HAP-1 (cell line): ENCODE measurements at regions of chr12 and their contacts with region 1.

Region 1: DNA sequence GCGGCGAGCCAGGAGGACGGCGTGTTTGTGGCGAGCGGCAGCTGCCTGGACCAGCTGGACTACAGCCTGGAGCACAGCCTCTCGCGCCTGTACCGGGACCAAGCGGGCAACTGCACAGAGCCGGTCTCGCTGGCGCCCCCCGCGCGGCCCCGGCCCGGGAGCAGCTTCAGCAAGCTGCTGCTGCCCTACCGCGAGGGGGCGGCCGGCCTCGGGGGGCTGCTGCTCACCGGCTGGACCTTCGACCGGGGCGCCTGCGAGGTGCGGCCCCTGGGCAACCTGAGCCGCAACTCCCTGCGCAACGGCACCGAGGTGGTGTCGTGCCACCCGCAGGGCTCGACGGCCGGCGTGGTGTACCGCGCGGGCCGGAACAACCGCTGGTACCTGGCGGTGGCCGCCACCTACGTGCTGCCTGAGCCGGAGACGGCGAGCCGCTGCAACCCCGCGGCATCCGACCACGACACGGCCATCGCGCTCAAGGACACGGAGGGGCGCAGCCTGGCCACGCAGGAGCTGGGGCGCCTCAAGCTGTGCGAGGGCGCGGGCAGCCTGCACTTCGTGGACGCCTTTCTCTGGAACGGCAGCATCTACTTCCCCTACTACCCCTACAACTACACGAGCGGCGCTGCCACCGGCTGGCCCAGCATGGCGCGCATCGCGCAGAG is 873 bp downstream of the PLXNC1 start:
- DNase-seq: peak; percentile 38 to 73
- H3K4me3 ChIP-seq: peak overlapping the region; percentile 60
- H3K4me1 ChIP-seq: peaks cover 29% of the 10 kb centered on the region
- H3K27me3 ChIP-seq: no peaks in the 10 kb centered on the region

Region 2: DNA sequence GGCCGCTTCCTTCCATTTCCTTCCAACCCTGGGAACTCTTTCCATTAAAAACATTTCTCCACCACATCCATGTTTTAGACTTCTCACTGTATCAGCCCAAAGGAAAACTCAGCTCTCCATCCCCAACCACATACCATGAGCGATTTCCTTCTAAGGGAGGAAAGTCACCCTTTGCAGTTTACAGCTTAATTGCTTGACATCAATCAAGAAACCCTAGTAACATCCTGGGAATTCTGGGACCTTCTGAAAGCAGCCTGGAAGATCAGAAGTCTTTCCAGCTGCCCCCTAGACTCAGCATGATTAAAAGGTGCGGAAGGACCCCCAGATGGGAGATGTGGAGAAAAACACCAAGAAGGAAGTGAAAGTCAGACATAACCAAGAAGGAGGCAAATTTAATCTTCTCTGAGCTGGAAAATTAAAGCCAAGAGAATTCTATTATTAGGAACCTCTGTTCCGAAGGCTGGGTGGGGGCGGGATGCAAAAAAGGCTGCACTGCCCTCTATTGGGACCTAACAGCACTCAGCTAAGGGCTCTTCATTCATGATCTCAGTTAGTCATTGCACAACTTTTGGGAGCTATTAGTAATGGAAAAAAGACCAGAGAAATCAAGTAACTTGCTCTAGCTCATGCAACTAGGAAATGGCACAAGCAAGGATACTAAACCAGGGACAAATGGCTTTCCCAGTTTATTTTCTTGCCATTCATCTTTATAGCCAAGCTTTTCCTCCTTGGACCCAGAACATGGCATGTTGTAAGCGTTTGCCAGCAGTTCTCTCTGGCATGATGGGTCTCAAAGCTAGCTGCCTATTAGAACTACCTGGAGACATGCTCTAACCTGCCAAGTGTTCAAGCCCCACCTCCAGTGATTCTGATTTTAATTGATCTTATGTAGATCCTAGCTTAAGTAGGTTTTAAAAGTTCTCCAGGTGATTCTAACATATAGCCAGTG is 74.0 kb before region 1 on chr12:
- in situ Hi-C with region 1: no loop called
- DNase-seq: peak; percentile 50 to 65
- H3K4me3 ChIP-seq: no peak overlapping the region
- H3K4me1 ChIP-seq: peaks cover 14% of the 10 kb centered on the region
- H3K27me3 ChIP-seq: no peaks in the 10 kb centered on the region

Region 3: DNA sequence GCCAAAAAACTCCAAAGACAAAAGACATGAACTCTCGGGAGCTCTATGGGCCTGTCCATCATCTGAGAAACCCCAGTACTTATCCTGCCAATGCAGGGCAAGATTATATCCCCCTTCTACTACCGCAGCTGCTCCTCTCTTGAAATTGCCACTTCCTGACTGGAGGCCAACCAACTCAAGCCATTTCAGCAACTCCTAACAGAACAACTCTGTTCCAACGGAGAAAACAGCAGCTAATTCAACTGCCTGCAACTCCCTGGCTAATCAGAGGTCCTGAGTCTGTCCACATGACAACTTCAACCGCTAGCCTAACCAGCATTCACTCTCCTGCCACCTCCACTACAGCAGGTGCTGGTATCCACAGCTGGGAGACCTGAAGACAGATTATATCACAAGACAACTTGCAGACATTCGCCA is 286.3 kb after region 1 on chr12:
- in situ Hi-C with region 1: loop called (anchors 10 kb)
- DNase-seq: no peak
- H3K4me3 ChIP-seq: no peak overlapping the region
- H3K4me1 ChIP-seq: peaks cover 31% of the 10 kb centered on the region
- H3K27me3 ChIP-seq: no peaks in the 10 kb centered on the region